ENCODE measurements at regions of chr3 and their contacts with region 1.

Region 1: GRCh38 chr3:149114458-149114857 is 15.0 kb upstream of the HPS3 start:
- DNase-seq: no peak
- ATAC-seq: peak in 1 of 4 donors; percentile 65
- H3K4me3 ChIP-seq: no peak overlapping the region
- H3K27ac ChIP-seq: no peak overlapping the region
- H3K4me1 ChIP-seq: peaks cover 0 to 10% (median 0%) of the 10 kb centered on the region in 12 donors
- H3K27me3 ChIP-seq: no peaks in the 10 kb centered on the region
- CTCF ChIP-seq: no peak
- POLR2A ChIP-seq: no peak

Region 2: GRCh38 chr3:149058602-149059001 is 55.9 kb before region 1 on chr3:
- intact Hi-C with region 1: no loop called
- DNase-seq: no peak
- ATAC-seq: no peak
- H3K4me3 ChIP-seq: no peak overlapping the region
- H3K27ac ChIP-seq: no peak overlapping the region
- H3K4me1 ChIP-seq: no peaks in the 10 kb centered on the region
- H3K27me3 ChIP-seq: no peaks in the 10 kb centered on the region
- CTCF ChIP-seq: no peak
- POLR2A ChIP-seq: no peak

Region 3: DNA sequence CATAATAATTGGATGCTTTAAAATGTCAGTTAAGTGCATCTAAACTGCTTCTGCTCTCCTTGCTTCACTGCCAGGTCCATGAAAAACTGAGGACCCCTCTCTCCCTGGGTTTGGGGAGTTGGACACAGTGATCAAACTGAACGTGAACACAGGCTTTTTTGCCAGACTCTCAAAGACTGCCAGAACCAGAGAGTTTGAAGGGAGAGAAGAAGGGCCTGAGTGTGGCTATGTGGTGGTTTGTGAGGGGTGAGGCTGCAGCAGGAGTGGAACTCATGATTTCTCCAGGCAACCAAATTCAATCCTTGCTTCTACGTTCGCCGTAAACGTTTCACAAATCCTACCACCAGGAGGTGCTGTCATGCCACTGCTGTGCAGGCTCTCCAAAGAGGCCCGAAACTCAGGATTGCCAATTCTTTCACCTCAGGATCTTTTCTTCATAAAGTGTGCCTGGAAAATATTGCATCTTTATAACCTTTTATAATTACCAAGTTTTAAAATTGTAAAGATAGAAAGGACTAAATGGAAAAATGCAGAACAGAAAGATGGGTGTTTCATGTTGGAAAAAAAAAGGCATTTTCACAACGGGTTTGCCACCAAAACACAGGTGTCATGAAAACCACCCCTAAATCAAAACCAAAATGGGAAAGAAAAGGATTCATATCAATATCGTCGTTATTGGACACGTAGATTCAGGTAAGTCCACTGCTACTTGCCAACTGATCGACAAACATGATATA is 379.7 kb after region 1 on chr3:
- intact Hi-C with region 1: loop called in 2 of 10 experiments (anchors 5 to 10 kb)
- DNase-seq: peak in 4 of 5 donors; percentile 55 to 62 (median 56)
- ATAC-seq: peak in 3 of 4 donors; percentile 58 to 80 (median 65)
- H3K4me3 ChIP-seq: no peak overlapping the region
- H3K27ac ChIP-seq: no peak overlapping the region
- H3K4me1 ChIP-seq: peaks cover 0 to 3% (median 0%) of the 10 kb centered on the region in 12 donors
- H3K27me3 ChIP-seq: peaks cover 0 to 6% (median 0%) of the 10 kb centered on the region in 9 donors
- CTCF ChIP-seq: peak; percentile 70 to 88 (median 80)
- POLR2A ChIP-seq: no peak